Activated T-helper 1 cell treated with anti-CD3 and anti-CD28 coated beads, Interleukin-12 subunit alpha, Interleukin-12 subunit beta, Interleukin-2, Interleukin-4 antibody, amounts not matched to agents 30 ng/mL and 10 ng/mL and 1 ng/mL, durations not matched to agents 14 hours and 24 hours and 36 hours (primary cell): ENCODE measurements at regions of chr15 and their contacts with region 1.

Region 1: DNA sequence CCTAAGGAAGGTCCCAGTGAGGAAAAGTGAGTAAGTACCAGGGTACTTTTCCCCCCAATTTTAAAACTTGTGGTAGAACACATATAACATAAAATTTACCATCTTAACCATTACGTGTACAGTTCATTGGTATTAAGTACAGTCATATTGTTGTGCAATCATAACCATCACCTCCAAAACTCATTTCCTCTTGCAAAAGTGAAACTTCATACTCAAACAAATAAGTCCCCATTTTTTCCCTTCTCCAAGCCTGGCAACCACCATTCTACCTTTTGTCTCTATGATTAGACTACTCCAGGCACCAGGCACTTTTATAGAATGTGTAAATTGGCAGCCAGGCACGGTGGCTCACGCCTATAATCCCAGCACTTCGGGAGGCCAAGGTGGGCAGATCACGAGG is 12.2 kb downstream of the PRC1 start:
- DNase-seq: no peak
- H3K4me3 Mint-ChIP-seq: peak overlapping the region; percentile 17
- H3K27ac Mint-ChIP-seq: peak overlapping the region; percentile 67
- H3K4me1 Mint-ChIP-seq: peaks cover 34% of the 10 kb centered on the region
- H3K27me3 Mint-ChIP-seq: no peaks in the 10 kb centered on the region

Region 2: GRCh38 chr15:90967206-90967605 is 14.9 kb before region 1 on chr15:
- intact Hi-C with region 1: loop called (anchors 2 kb)
- DNase-seq: no peak
- H3K4me3 Mint-ChIP-seq: no peak overlapping the region
- H3K27ac Mint-ChIP-seq: no peak overlapping the region
- H3K4me1 Mint-ChIP-seq: no peaks in the 10 kb centered on the region
- H3K27me3 Mint-ChIP-seq: no peaks in the 10 kb centered on the region